Activated B cell treated with CpG ODN at 0.5 μM for 24 hours (primary cell): ENCODE measurements at regions of chr9 and their contacts with region 1.

Region 1: GRCh38 chr9:26710008-26710407 is 182.6 kb downstream of the CAAP1 start:
- DNase-seq: no peak
- ATAC-seq: no peak
- H3K4me3 Mint-ChIP-seq: no peak overlapping the region
- H3K27ac Mint-ChIP-seq: no peak overlapping the region
- H3K4me1 Mint-ChIP-seq: no peaks in the 10 kb centered on the region
- H3K27me3 Mint-ChIP-seq: no peaks in the 10 kb centered on the region
- CTCF ChIP-seq: no peak

Region 2: DNA sequence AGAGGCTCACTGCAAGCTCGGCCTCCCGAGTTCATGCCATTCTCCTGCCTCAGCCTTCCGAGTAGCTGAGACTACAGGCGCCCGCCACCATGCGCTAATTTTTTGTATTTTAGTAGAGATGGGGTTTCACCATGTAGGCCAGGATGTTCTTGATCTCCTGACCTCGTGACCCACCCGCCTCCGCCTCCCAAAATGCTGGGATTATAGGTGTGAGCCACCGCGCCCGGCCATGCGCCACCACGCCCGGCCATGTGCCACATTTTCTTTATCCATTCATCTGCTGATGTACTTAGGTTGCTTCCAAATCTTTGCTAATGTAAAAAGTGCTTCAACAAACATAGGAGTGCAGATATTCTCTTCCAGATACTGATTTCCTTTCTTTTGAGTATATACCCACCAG is 226.0 kb before region 1 on chr9:
- CTCF ChIA-PET with region 1: no interaction called
- POLR2A ChIA-PET with region 1: no interaction called
- intact Hi-C with region 1: no loop called
- DNase-seq: no peak
- ATAC-seq: no peak
- H3K4me3 Mint-ChIP-seq: no peak overlapping the region
- H3K27ac Mint-ChIP-seq: no peak overlapping the region
- H3K4me1 Mint-ChIP-seq: no peaks in the 10 kb centered on the region
- H3K27me3 Mint-ChIP-seq: no peaks in the 10 kb centered on the region
- CTCF ChIP-seq: no peak

Region 3: DNA sequence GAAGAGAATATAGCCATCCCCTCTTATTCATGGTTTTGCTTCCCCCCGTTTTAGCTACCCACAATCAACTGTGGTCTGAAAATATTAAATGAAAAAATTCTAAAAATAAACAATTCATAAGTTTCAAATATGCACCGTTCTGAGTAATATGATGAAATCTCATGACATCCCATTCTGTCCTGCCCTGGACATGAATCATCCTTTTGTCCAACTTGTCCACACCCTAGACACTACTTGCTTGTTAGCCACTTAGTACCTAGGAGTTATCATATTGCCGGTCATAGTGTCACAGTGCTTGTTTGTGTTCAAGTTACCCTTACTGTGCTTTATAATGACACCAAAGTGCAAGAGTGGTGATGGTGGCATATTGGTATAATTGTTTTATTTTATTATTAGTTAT is 69.1 kb after region 1 on chr9:
- CTCF ChIA-PET with region 1: no interaction called
- POLR2A ChIA-PET with region 1: no interaction called
- intact Hi-C with region 1: loop called (anchors 10 kb)
- DNase-seq: no peak
- ATAC-seq: no peak
- H3K4me3 Mint-ChIP-seq: no peak overlapping the region
- H3K27ac Mint-ChIP-seq: no peak overlapping the region
- H3K4me1 Mint-ChIP-seq: no peaks in the 10 kb centered on the region
- H3K27me3 Mint-ChIP-seq: peaks cover 5% of the 10 kb centered on the region
- CTCF ChIP-seq: no peak

Region 4: GRCh38 chr9:27033823-27034403 is 323.9 kb after region 1 on chr9:
- CTCF ChIA-PET with region 1: no interaction called
- POLR2A ChIA-PET with region 1: no interaction called
- intact Hi-C with region 1: no loop called
- DNase-seq: no peak
- ATAC-seq: peak; percentile 61
- H3K4me3 Mint-ChIP-seq: no peak overlapping the region
- H3K27ac Mint-ChIP-seq: no peak overlapping the region
- H3K4me1 Mint-ChIP-seq: no peaks in the 10 kb centered on the region
- H3K27me3 Mint-ChIP-seq: no peaks in the 10 kb centered on the region
- CTCF ChIP-seq: peak; percentile 96